Uterus (tissue), 4 donors: ENCODE measurements at regions of chr19 and their contacts with region 1.

Region 1: GRCh38 chr19:12139885-12140547 is at the start of gene ZNF20:
- DNase-seq: peak; percentile 94 to 96
- H3K4me3 ChIP-seq: peak within 1 kb of the TSS; percentile 58 to 75
- H3K27ac ChIP-seq: peak within 1 kb of the TSS; percentile 79
- H3K4me1 ChIP-seq: no peaks in the 10 kb centered on the region
- H3K27me3 ChIP-seq: no peaks in the 10 kb centered on the region
- CTCF ChIP-seq: no peak
- POLR2A ChIP-seq: peak; percentile 24 to 52
- total RNA-seq, gene ZNF20: 5.0 to 15.7 TPM in 2 of 4 donors, not detected in the others

Region 2: GRCh38 chr19:12055783-12056182 is 84.2 kb before region 1 on chr19:
- intact Hi-C with region 1: loop called (anchors 5 kb)
- DNase-seq: no peak
- H3K4me3 ChIP-seq: no peak overlapping the region
- H3K27ac ChIP-seq: no peak overlapping the region
- H3K4me1 ChIP-seq: peaks cover 0 to 3% of the 10 kb centered on the region in 2 donors
- H3K27me3 ChIP-seq: no peaks in the 10 kb centered on the region
- CTCF ChIP-seq: no peak
- POLR2A ChIP-seq: no peak